Common myeloid progenitor, CD34-positive (primary cell): ENCODE measurements at regions of chr10 and their contacts with region 1.

Region 1: DNA sequence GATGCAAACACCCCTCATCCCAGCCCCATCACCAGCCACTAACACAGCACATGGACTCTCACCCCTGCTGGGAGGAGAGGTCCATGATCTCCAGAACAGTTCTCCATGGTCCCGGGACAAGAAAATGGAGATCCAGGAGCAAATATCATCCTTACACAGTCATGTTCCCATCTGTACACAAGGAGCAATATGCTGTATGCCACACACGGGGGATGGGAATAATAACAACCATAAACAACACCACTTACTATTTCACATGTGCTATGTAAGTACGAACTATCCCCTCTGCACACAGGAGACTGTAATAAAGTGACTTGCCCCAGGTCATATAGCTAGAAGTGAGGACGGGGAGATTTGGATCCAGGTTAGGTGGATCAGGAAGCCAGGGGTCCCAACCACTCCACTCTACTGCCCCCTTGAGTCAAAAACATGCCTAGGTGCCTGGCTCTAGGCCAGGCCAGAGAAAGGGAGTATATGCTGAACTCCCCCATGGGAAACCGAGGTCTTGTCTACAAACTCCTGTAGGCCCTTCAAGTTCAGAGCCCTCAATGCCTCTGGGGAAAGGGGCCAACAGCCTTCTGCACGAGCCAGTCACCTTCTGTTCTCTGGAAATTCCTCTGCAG is 34.1 kb downstream of the LRRC20 start:
- DNase-seq: peak; percentile 30 to 60 (median 52)
- H3K4me3 ChIP-seq: no peak overlapping the region
- H3K27ac ChIP-seq: no peak overlapping the region
- H3K4me1 ChIP-seq: peaks cover 0 to 7% (median 0%) of the 10 kb centered on the region in 4 experiments
- H3K27me3 ChIP-seq: peaks cover 0 to 11% (median under 1%) of the 10 kb centered on the region in 5 experiments

Region 2: DNA sequence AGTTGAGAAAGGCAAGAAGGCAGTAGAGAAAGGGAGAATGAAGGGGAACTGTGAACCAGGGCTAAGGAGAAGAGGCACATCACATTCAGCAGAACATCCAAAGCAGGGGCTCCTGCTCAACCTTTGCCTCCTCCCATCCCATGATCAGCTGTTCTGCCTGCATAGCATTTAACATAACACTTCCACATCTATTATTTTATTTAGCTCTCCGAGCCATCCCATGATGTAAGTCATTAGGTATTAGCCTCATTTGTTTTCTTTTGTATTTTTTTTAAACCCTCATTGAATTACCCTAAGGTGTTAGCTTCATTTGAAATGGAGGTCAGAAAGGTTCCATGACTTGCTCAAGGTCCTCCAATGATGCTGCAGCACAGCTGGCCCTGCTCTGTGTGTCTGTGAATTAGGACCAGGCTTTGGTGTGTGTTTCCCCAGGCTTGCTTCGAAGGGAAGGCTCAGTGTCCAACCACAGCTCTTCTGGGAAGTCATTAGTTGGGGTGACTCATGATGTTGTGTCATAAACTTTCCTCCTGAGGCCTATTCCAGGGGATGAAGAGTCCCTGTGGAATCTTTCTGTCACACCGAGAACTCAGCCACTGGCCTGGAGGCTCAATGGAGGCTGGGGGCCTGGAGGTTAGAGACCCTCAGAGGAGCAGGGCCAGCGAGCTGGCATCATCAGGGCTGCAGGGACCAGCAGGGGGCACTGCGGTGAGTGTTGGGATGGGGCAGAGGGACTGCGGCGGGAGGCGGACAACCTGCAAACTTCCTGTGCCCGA is 81.0 kb before region 1 on chr10:
- CTCF ChIA-PET with region 1: interaction called, 59 read pairs
- POLR2A ChIA-PET with region 1: no interaction called
- DNase-seq: no peak
- H3K4me3 ChIP-seq: no peak overlapping the region
- H3K27ac ChIP-seq: no peak overlapping the region
- H3K4me1 ChIP-seq: no peaks in the 10 kb centered on the region
- H3K27me3 ChIP-seq: peaks cover 0 to 20% (median 4%) of the 10 kb centered on the region in 5 experiments

Region 3: DNA sequence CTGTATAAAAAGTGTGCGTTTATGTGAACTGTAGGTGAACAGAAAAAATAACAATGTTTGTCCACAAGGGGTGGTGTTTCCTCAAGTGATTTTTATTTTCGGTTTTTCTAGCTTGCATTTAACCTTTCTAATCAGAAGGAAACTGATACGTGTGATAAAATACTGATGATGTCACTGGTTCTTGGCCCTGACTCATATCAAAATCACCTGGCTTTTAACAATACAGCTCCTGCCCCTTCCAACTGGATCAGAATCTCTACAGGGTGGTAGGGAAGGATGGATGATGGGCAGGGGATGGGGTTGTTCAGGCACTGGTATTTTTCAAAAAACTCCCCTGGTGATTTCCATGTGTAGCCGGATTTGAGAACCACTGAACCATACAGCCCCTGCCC is 75.4 kb before region 1 on chr10:
- CTCF ChIA-PET with region 1: interaction called, 59 read pairs
- POLR2A ChIA-PET with region 1: no interaction called
- DNase-seq: peak; percentile 52 to 75 (median 72)
- H3K4me3 ChIP-seq: peak overlapping the region in 1 of 7 experiments; percentile 8
- H3K27ac ChIP-seq: no peak overlapping the region
- H3K4me1 ChIP-seq: peaks cover 0 to 2% (median 0%) of the 10 kb centered on the region in 4 experiments
- H3K27me3 ChIP-seq: peaks cover 0 to 19% (median 0%) of the 10 kb centered on the region in 5 experiments

Region 4: GRCh38 chr10:70331486-70332268 is 16.7 kb before region 1 on chr10:
- CTCF ChIA-PET with region 1: interaction called, 10 read pairs
- POLR2A ChIA-PET with region 1: no interaction called
- DNase-seq: peak; percentile 90 to 97 (median 96)
- H3K4me3 ChIP-seq: peak overlapping the region in 1 of 7 experiments; percentile 10
- H3K27ac ChIP-seq: no peak overlapping the region
- H3K4me1 ChIP-seq: peaks cover 0 to 23% (median 18%) of the 10 kb centered on the region in 4 experiments
- H3K27me3 ChIP-seq: peaks cover 0 to 76% (median 30%) of the 10 kb centered on the region in 5 experiments